Right lobe of liver (tissue), 6 donors: ENCODE measurements at regions of chr3 and their contacts with region 1.

Region 1: GRCh38 chr3:171556148-171557145 is 96.2 kb upstream of the TNIK start:
- DNase-seq: no peak
- ATAC-seq: no peak
- H3K4me3 ChIP-seq: no peak overlapping the region
- H3K27ac ChIP-seq: no peak overlapping the region
- H3K4me1 ChIP-seq: no peaks in the 10 kb centered on the region
- H3K27me3 ChIP-seq: no peaks in the 10 kb centered on the region
- CTCF ChIP-seq: no peak
- POLR2A ChIP-seq: no peak

Region 2: GRCh38 chr3:170953229-170953628 is 603.2 kb before region 1 on chr3:
- intact Hi-C with region 1: loop called in 1 of 2 experiments (anchors 10 kb)
- DNase-seq: no peak
- ATAC-seq: no peak
- H3K4me3 ChIP-seq: no peak overlapping the region
- H3K27ac ChIP-seq: no peak overlapping the region
- H3K4me1 ChIP-seq: peaks cover 0 to 14% (median 4%) of the 10 kb centered on the region in 4 donors
- H3K27me3 ChIP-seq: no peaks in the 10 kb centered on the region
- CTCF ChIP-seq: no peak
- POLR2A ChIP-seq: no peak

Region 3: DNA sequence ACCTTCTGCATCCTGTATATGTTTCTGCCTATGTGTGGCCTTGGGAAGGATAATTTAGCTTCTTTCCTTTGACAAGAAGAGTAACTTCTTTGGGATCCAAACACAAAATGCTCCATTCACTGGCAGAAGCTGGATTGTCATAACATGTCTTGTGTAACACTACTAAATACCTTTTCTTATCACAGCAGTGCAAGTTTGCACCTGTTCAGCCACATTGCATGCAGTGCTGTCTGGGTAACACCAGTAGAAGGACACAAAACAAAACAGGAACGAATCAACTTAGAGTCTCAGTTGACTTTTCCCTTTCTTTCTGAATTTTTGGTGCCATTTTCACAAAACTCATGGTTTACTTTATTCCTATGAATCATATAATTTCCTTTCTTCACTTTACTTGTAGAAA is 52.6 kb before region 1 on chr3:
- intact Hi-C with region 1: no loop called
- DNase-seq: no peak
- ATAC-seq: no peak
- H3K4me3 ChIP-seq: no peak overlapping the region
- H3K27ac ChIP-seq: no peak overlapping the region
- H3K4me1 ChIP-seq: no peaks in the 10 kb centered on the region
- H3K27me3 ChIP-seq: no peaks in the 10 kb centered on the region
- CTCF ChIP-seq: no peak
- POLR2A ChIP-seq: no peak